ENCODE measurements at regions of chrX and their contacts with region 1.

Region 1: GRCh38 chrX:139759637-139760036 is 51.7 kb upstream of the MCF2 start:
- DNase-seq: peak in 1 of 2 donors; percentile 2
- ATAC-seq: peak in 2 of 3 donors; percentile 55 to 56
- H3K4me3 ChIP-seq: no peak overlapping the region
- H3K4me3 Mint-ChIP-seq: no peak overlapping the region
- H3K27ac ChIP-seq: no peak overlapping the region
- H3K27ac Mint-ChIP-seq: no peak overlapping the region
- H3K4me1 ChIP-seq: no peaks in the 10 kb centered on the region
- H3K4me1 Mint-ChIP-seq: peaks cover 7 to 11% of the 10 kb centered on the region in 2 donors
- H3K27me3 ChIP-seq: no peaks in the 10 kb centered on the region
- H3K27me3 Mint-ChIP-seq: no peaks in the 10 kb centered on the region
- CTCF ChIP-seq: peak; percentile 56

Region 2: GRCh38 chrX:138775517-138775916 is 984.1 kb before region 1 on chrX:
- intact Hi-C with region 1: loop called (anchors 5 kb)
- DNase-seq: peak in 1 of 2 donors; percentile 1
- ATAC-seq: peak in 1 of 3 donors; percentile 38
- H3K4me3 ChIP-seq: no peak overlapping the region
- H3K4me3 Mint-ChIP-seq: no peak overlapping the region
- H3K27ac ChIP-seq: no peak overlapping the region
- H3K27ac Mint-ChIP-seq: no peak overlapping the region
- H3K4me1 ChIP-seq: no peaks in the 10 kb centered on the region
- H3K4me1 Mint-ChIP-seq: peaks cover 0 to 4% of the 10 kb centered on the region in 2 donors
- H3K27me3 ChIP-seq: no peaks in the 10 kb centered on the region
- H3K27me3 Mint-ChIP-seq: peaks cover 0 to 8% of the 10 kb centered on the region in 2 donors
- CTCF ChIP-seq: no peak

Region 3: GRCh38 chrX:139126493-139126892 is 633.1 kb before region 1 on chrX:
- intact Hi-C with region 1: loop called (anchors 5 kb)
- DNase-seq: peak in 1 of 2 donors; percentile 1
- ATAC-seq: peak in 1 of 3 donors; percentile 50
- H3K4me3 ChIP-seq: no peak overlapping the region
- H3K4me3 Mint-ChIP-seq: no peak overlapping the region
- H3K27ac ChIP-seq: no peak overlapping the region
- H3K27ac Mint-ChIP-seq: no peak overlapping the region
- H3K4me1 ChIP-seq: no peaks in the 10 kb centered on the region
- H3K4me1 Mint-ChIP-seq: no peaks in the 10 kb centered on the region
- H3K27me3 ChIP-seq: no peaks in the 10 kb centered on the region
- H3K27me3 Mint-ChIP-seq: peaks cover 0 to 32% of the 10 kb centered on the region in 2 donors
- CTCF ChIP-seq: no peak

Region 4: GRCh38 chrX:140180585-140180984 is 420.9 kb after region 1 on chrX:
- intact Hi-C with region 1: no loop called
- DNase-seq: no peak
- ATAC-seq: no peak
- H3K4me3 ChIP-seq: no peak overlapping the region
- H3K4me3 Mint-ChIP-seq: no peak overlapping the region
- H3K27ac ChIP-seq: no peak overlapping the region
- H3K27ac Mint-ChIP-seq: no peak overlapping the region
- H3K4me1 ChIP-seq: no peaks in the 10 kb centered on the region
- H3K4me1 Mint-ChIP-seq: no peaks in the 10 kb centered on the region
- H3K27me3 ChIP-seq: no peaks in the 10 kb centered on the region
- H3K27me3 Mint-ChIP-seq: no peaks in the 10 kb centered on the region
- CTCF ChIP-seq: no peak